Right cardiac atrium (tissue), 5 donors: ENCODE measurements at regions of chr5 and their contacts with region 1.

Region 1: DNA sequence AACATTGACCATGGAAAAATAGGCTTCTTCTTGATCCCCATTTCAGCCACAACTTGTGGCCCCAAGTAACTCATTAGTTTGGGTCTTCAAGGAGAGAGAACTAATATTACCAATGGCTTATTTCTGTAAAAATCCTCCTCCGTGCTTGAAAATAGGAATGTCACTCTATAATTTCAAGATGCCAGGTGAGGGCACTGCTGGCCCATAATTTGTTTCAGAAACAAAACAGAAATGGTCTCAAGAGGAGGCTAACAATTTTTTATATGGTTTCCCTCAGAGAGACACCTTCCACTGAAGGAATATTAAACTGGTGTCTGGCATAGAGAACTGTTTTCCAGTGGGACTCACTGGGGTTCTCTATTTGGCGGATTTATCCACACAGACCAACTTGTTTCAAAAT is 437.0 kb upstream of the TRPC7 start:
- DNase-seq: no peak
- ATAC-seq: no peak
- H3K4me3 ChIP-seq: no peak overlapping the region
- H3K27ac ChIP-seq: no peak overlapping the region
- H3K4me1 ChIP-seq: no peaks in the 10 kb centered on the region
- H3K27me3 ChIP-seq: no peaks in the 10 kb centered on the region

Region 2: GRCh38 chr5:137086342-137086741 is 284.0 kb after region 1 on chr5:
- intact Hi-C with region 1: no loop called
- DNase-seq: no peak
- ATAC-seq: no peak
- H3K4me3 ChIP-seq: no peak overlapping the region
- H3K27ac ChIP-seq: no peak overlapping the region
- H3K4me1 ChIP-seq: peaks cover 4% of the 10 kb centered on the region
- H3K27me3 ChIP-seq: no peaks in the 10 kb centered on the region

Region 3: GRCh38 chr5:137218471-137218870 is 416.1 kb after region 1 on chr5:
- intact Hi-C with region 1: loop called in 1 of 4 experiments (anchors 10 kb)
- DNase-seq: no peak
- ATAC-seq: no peak
- H3K4me3 ChIP-seq: no peak overlapping the region
- H3K27ac ChIP-seq: no peak overlapping the region
- H3K4me1 ChIP-seq: peaks cover 4% of the 10 kb centered on the region
- H3K27me3 ChIP-seq: no peaks in the 10 kb centered on the region